Endothelial cell of umbilical vein (primary cell): ENCODE measurements at regions of chr12 and their contacts with region 1.

Region 1: GRCh38 chr12:118103604-118104382 is at the start of gene VSIG10:
- DNase-seq: peak; percentile 74
- H3K4me3 ChIP-seq: peak within 1 kb of the TSS; percentile 48 to 78 (median 52)
- H3K27ac ChIP-seq: peak within 1 kb of the TSS; percentile 61
- H3K4me1 ChIP-seq: peaks cover 11% of the 10 kb centered on the region
- H3K27me3 ChIP-seq: no peaks in the 10 kb centered on the region
- CTCF ChIP-seq: no peak
- POLR2A ChIP-seq: no peak
- total RNA-seq, gene VSIG10: 38.4 and 38.6 TPM in 2 replicates

Region 2: GRCh38 chr12:117919479-117919878 is 184.3 kb before region 1 on chr12:
- CTCF ChIA-PET with region 1: no interaction called
- POLR2A ChIA-PET with region 1: no interaction called
- dilution Hi-C with region 1: no loop called
- intact Hi-C with region 1: no loop called
- DNase-seq: no peak
- H3K4me3 ChIP-seq: no peak overlapping the region
- H3K27ac ChIP-seq: no peak overlapping the region
- H3K4me1 ChIP-seq: no peaks in the 10 kb centered on the region
- H3K27me3 ChIP-seq: no peaks in the 10 kb centered on the region
- CTCF ChIP-seq: no peak
- POLR2A ChIP-seq: no peak

Region 3: GRCh38 chr12:118135788-118136558 is 32.2 kb after region 1 on chr12 and contains the start of gene PEBP1:
- CTCF ChIA-PET with region 1: no interaction called
- POLR2A ChIA-PET with region 1: no interaction called
- dilution Hi-C with region 1: no loop called
- intact Hi-C with region 1: loop called (anchors 5 kb)
- DNase-seq: peak; percentile 94
- H3K4me3 ChIP-seq: peak within 1 kb of the TSS; percentile 48 to 82 (median 75)
- H3K27ac ChIP-seq: peak within 1 kb of the TSS; percentile 49
- H3K4me1 ChIP-seq: peaks cover 4% of the 10 kb centered on the region
- H3K27me3 ChIP-seq: no peaks in the 10 kb centered on the region
- CTCF ChIP-seq: no peak
- POLR2A ChIP-seq: peak; percentile 91
- total RNA-seq, gene PEBP1: 146 and 185 TPM in 2 replicates